SK-N-SH (cell line): ENCODE measurements at regions of chr2 and their contacts with region 1.

Region 1: GRCh38 chr2:127479219-127479825 is 47.0 kb downstream of the IWS1 start:
- DNase-seq: peak; percentile 56
- H3K4me3 ChIP-seq: no peak overlapping the region
- H3K27ac ChIP-seq: no peak overlapping the region
- H3K4me1 ChIP-seq: no peaks in the 10 kb centered on the region
- H3K27me3 ChIP-seq: no peaks in the 10 kb centered on the region
- CTCF ChIP-seq: peak; percentile 91
- EP300 ChIP-seq: no peak
- RAD21 ChIP-seq: peak; percentile 84

Region 2: DNA sequence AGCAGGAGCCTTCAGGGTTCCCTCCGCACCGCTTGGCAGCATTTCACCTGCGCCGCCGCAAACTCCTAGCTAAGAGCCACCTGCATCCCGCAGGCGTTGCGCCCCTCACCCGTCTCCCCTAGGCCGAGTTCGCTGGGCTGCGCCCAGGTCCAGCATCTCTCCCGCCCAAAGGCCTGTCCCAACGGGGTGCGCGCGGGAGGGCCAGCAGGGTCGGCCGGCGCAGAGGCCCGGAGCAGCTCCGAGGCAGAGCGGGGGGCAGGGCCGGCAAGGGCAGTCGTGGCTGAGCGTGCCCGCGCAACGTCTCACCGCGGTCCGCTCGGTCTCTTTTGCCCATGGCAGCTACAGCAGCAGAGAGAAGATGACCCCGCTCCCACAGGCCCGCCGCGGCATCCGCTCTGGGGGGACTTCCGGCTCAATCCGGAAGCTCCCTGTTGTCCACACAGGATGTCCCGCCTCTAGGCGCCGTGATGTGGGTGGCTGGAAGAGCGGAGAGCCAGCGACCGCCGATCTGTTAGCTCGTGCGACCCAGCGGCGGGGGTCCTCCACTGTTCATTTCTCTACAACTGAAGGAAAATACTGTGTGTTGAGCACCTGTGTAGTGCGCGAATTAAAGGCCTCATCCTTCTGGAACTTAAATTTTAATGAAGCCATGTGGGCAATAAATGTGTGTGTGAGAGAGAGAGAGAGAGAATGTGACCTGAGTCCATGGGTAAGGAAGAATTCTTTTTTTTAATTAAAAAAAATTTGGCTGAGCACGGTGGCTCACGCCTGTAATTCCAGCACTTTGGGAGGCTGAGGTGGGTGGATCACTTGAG is 185.4 kb before region 1 on chr2 and contains the start of gene ERCC3:
- CTCF ChIA-PET with region 1: interaction called, 11 read pairs
- POLR2A ChIA-PET with region 1: no interaction called
- DNase-seq: peak; percentile 95
- H3K4me3 ChIP-seq: peak within 1 kb of the TSS; percentile 93 to 98
- H3K27ac ChIP-seq: peak within 1 kb of the TSS; percentile 65 to 77
- H3K4me1 ChIP-seq: peaks cover 0 to 4% of the 10 kb centered on the region in 2 experiments; a peak in 1 of 4 replicates
- H3K27me3 ChIP-seq: no peaks in the 10 kb centered on the region
- CTCF ChIP-seq: no peak
- EP300 ChIP-seq: peak in 1 of 2 experiments; percentile 17; a peak in 1 of 4 replicates
- RAD21 ChIP-seq: no peak
- polyA plus RNA-seq, gene ERCC3: 84.8 and 101 TPM in 2 replicates

Region 3: GRCh38 chr2:127324635-127325034 is 154.7 kb before region 1 on chr2:
- CTCF ChIA-PET with region 1: interaction called, 121 read pairs
- POLR2A ChIA-PET with region 1: no interaction called
- DNase-seq: peak; percentile 50
- H3K4me3 ChIP-seq: no peak overlapping the region; a peak in 1 of 4 replicates
- H3K27ac ChIP-seq: no peak overlapping the region
- H3K4me1 ChIP-seq: no peaks in the 10 kb centered on the region; a peak in 1 of 4 replicates
- H3K27me3 ChIP-seq: no peaks in the 10 kb centered on the region
- CTCF ChIP-seq: peak; percentile 81
- EP300 ChIP-seq: no peak
- RAD21 ChIP-seq: peak; percentile 78

Region 4: DNA sequence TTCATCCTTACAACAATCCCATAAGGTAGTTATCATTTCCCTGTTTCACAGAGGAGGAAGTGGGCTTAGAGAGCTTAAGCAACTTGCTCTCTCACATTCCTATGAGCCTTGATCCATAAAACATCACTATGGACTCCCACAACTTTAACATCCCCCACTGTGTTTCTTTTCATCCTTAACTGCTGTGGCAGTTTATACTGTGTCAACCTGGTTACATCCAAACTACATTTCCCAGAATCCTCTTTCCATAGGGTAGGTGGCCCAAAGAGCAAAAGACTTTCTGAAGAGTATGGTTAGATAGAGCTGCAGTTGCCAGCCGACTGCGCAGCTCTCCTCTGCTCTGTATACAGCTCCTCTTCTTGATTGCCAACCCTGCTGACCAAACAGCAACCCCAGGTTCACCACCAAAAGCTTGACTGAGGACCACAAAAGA is 114.1 kb before region 1 on chr2:
- CTCF ChIA-PET with region 1: interaction called, 13 read pairs
- POLR2A ChIA-PET with region 1: no interaction called
- DNase-seq: no peak
- H3K4me3 ChIP-seq: no peak overlapping the region
- H3K27ac ChIP-seq: no peak overlapping the region
- H3K4me1 ChIP-seq: peaks cover 10 to 13% of the 10 kb centered on the region in 2 experiments; a peak in 3 of 4 replicates
- H3K27me3 ChIP-seq: no peaks in the 10 kb centered on the region
- CTCF ChIP-seq: no peak
- EP300 ChIP-seq: no peak
- RAD21 ChIP-seq: no peak

Region 5: DNA sequence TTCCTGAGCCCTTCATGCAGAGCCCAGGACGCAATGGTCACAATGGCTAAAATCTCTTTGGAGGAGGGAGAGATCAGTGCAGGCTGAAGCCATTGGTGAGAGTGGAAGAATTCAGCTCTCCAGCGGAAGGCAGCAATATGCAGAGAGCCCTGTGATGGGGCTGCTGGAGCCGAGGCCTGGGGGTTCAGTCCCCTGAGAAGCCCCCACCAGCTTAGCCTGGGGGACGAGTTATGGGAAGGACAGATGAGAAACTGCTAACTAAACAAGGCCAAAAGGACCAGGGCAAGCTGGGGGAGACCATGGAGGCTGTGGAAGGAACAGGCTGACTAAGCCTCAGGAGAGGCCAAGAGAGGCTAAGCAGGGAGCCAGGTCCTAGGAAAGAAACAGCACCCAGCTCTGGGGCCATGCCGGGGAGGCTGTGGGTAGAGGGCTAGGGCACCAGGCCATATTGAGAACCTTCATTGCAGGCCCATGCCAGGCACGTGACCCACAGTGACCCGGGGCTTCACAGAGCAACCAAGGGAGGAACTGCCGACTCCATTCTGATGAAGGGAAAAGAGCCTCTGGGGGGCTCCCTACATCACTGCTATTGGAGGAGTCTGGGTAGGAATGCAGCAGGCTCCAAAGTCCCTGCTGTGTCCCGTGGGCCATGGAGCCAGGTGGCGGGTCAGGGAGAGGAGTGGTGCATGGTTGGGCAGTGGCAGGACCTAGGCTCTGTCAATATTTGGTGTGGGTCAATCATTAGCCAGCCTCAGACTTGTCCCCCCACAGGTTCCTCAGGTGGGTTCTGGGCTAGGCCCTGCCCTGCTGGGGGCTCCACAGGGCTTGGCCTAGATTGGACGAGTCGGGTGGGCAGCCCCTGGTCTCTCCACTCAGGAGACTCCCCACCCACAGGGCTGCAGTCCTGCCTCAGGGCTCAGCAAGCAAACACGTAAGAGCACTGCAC is 41.3 kb before region 1 on chr2:
- CTCF ChIA-PET with region 1: interaction called, 16 read pairs
- POLR2A ChIA-PET with region 1: no interaction called
- DNase-seq: no peak
- H3K4me3 ChIP-seq: no peak overlapping the region
- H3K27ac ChIP-seq: no peak overlapping the region
- H3K4me1 ChIP-seq: no peaks in the 10 kb centered on the region
- H3K27me3 ChIP-seq: no peaks in the 10 kb centered on the region
- CTCF ChIP-seq: no peak
- EP300 ChIP-seq: no peak
- RAD21 ChIP-seq: no peak

Region 6: GRCh38 chr2:127453392-127454171 is 25.7 kb before region 1 on chr2:
- CTCF ChIA-PET with region 1: interaction called, 12 read pairs
- POLR2A ChIA-PET with region 1: interaction called, 3 read pairs
- DNase-seq: peak; percentile 28
- H3K4me3 ChIP-seq: no peak overlapping the region
- H3K27ac ChIP-seq: no peak overlapping the region
- H3K4me1 ChIP-seq: no peaks in the 10 kb centered on the region; a peak in 1 of 4 replicates
- H3K27me3 ChIP-seq: no peaks in the 10 kb centered on the region
- CTCF ChIP-seq: peak; percentile 26
- EP300 ChIP-seq: no peak
- RAD21 ChIP-seq: no peak; the same call in 1 of the 2 replicates

Region 7: DNA sequence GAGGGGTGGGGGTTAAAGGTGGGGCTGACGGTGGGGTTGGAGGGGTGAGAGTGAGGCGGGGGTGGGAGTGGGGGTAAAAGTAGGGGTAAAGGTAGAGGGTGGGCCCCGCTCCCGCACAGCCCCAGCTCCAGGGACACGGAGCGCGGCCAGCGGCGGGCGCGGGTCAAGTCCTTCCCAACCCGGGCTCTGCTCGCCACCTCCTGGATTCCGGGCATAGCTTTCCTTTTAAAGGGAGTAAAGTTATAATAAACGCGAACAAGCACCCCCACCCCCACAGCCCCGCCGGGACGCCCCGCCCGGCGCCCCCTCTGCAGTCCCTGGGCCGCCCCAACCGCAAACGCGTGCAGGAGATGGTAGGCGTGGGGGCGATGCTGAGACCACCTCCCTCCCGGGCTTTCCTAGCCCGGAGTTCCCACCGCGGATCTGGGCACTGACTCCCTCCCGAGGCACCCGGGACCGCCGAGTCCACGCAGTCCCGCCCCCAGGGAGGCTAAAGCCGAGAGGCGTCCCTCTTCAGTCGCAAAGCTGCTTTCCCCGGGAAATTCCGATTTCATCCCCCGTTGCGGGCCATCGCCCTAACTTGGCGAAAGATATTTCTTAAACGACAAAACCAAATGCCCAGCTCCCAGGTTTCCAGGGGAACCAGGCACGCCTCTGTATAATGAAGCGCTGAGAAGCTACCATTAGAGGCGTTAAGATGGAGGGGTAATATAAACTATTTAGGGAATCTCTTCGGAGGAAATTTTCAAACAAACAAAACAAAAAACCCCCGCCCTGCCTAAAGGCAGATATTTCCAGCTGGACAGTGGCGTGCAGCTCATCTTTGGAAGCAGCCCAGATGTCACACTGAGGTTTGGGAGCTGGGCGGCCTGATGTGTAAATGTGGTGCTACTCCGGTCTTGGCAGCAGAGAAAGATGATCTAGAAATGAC is 196.3 kb after region 1 on chr2 and contains the start of gene LIMS2:
- CTCF ChIA-PET with region 1: interaction called, 13 read pairs
- POLR2A ChIA-PET with region 1: no interaction called
- DNase-seq: peak; percentile 85
- H3K4me3 ChIP-seq: peak within 1 kb of the TSS; percentile 58 to 85
- H3K27ac ChIP-seq: no peak within 1 kb of the TSS
- H3K4me1 ChIP-seq: peaks cover 0 to 6% of the 10 kb centered on the region in 2 experiments; a peak in 1 of 4 replicates
- H3K27me3 ChIP-seq: peaks cover 14% of the 10 kb centered on the region; the same call in 1 of the 2 replicates
- CTCF ChIP-seq: 0 out of 2 replicates have a peak, but pooled peaks have one; percentile 16
- EP300 ChIP-seq: no peak
- RAD21 ChIP-seq: peak; percentile 57
- polyA plus RNA-seq, gene LIMS2: 2.2 and 2.7 TPM in 2 replicates